Posterior cingulate gyrus (tissue), 11 donors: ENCODE measurements at regions of chr16 and their contacts with region 1.

Region 1: DNA sequence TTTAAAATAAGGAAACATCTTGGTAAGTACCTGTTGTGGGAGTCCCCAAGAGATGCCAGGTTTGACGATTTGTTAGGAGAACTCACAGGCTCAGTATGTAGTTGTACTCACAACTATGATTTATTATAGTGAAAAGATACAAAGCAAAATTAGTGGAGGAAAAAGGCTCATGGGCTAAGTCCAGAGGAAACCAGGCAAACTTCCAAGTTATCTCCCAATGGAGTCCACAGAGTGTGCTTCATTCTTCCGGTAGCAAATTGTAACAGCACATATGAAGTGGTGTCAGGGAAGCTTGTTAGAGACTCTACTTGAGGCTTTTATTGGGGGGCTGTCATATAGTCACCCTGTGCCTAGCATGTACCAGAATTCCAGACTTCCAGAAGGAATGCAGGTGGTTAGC is 2.3 kb downstream of the DDX19A start:
- DNase-seq: no peak

Region 2: DNA sequence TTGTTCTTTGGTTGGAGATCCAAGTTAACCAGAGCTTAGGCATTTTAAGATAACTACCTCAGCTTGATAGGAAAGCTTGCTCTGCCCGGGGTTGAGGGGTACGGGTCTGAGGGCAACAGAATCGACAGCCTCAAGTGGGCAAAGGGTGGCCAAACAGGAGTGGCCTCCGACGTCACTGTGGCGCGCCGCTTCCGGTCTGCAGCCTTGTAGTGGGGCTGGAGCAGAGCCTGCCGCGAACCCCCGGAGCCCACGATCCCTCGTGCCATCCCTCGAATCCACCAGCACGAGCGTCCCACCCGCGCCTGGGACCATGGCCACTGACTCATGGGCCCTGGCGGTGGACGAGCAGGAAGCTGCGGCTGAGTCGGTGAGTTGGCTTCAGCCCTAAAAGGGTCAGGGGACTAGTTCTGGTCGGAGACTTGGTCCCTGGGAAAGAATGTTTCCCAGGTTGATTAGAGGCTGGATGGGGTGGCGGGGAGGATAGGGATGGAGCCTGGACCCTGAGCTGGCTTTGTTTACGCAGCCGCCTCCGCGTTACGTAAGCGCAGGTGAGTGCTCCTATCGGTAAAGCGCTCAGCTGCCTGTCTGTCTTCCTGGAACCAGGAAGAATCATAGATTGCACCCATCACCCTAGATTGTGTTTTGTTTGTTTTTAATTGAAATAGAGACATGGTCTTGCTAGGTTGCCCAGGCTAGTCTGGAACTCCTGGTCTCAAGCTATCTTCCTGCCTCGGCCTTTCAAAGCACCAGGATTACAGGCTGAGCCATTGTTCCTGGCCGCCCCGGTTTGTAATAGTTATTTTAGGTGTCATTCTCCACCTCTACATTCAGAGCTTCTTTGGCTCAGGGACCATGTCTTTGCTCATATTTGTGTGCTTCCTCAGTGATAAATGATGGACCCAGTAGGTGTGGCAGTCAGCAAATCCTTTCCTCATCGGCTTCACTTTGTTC is 49.7 kb before region 1 on chr16 and contains the start of gene DDX19B:
- intact Hi-C with region 1: loop called (anchors 5 kb)
- DNase-seq: peak; percentile 69 to 98 (median 84)

Region 3: GRCh38 chr16:70395345-70395901 is 46.4 kb after region 1 on chr16:
- intact Hi-C with region 1: no loop called
- DNase-seq: peak in 6 of 10 donors; percentile 40 to 90 (median 50)

Region 4: DNA sequence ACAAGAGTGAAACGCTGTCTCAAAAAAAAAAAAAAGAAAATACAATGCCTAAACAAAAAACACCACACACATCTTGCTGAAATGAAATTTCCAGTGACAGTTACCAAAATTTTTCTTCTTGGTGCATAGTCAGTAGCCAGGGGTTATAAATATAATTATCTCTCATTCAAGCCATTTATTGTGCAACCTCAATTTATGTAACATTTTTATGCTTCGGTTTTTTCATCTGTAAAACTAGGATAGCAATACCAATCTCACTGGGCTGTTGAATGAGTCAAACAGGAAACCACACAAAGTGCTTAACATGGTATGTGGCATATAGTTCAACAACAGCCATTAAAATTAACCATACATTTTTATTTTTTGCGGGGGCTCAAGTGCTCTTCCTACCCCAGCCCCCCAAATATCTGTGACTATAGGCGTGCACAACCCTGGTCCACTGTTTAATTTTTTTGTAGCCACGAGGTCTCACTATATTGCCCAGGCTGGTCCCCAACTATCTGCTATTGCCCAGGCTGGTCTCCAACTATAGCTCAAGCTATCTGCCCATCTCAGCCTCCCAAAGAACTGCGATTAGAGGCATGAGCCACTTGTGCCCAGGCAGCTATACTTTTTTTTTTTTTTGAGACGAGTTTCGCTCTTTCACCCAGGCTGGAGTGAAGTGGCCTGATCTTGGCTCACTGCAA is 171.8 kb after region 1 on chr16:
- intact Hi-C with region 1: no loop called
- DNase-seq: no peak

Region 5: GRCh38 chr16:70573451-70574121 is 224.6 kb after region 1 on chr16:
- intact Hi-C with region 1: no loop called
- DNase-seq: peak in 3 of 10 donors; percentile 38 to 85 (median 77)